GM10248 (cell line): ENCODE measurements at regions of chr1 and their contacts with region 1.

Region 1: GRCh38 chr1:6861075-6861724 is 75.9 kb downstream of the CAMTA1 start:
- DNase-seq: peak; percentile 18
- CTCF ChIP-seq: no peak

Region 2: GRCh38 chr1:6872573-6873261 is 11.5 kb after region 1 on chr1:
- CTCF ChIA-PET with region 1: interaction called, 11 read pairs
- POLR2A ChIA-PET with region 1: no interaction called
- DNase-seq: no peak
- CTCF ChIP-seq: no peak